CD4-positive, alpha-beta memory T cell (primary cell): ENCODE measurements at regions of chr1 and their contacts with region 1.

Region 1: GRCh38 chr1:23691499-23692307 is at the start of gene RPL11:
- DNase-seq: peak; percentile 85 to 92 (median 90)
- H3K4me3 ChIP-seq: peak within 1 kb of the TSS; percentile 37 to 93
- H3K4me3 Mint-ChIP-seq: peak within 1 kb of the TSS; percentile 93 to 99 (median 96)
- H3K27ac ChIP-seq: peak within 1 kb of the TSS; percentile 91
- H3K27ac Mint-ChIP-seq: peak within 1 kb of the TSS; percentile 87 to 98 (median 95)
- H3K4me1 ChIP-seq: peaks cover 47% of the 10 kb centered on the region
- H3K4me1 Mint-ChIP-seq: peaks cover 42 to 53% (median 45%) of the 10 kb centered on the region in 4 donors
- H3K27me3 ChIP-seq: no peaks in the 10 kb centered on the region
- H3K27me3 Mint-ChIP-seq: no peaks in the 10 kb centered on the region
- total RNA-seq, gene RPL11: 1,919 to 2,088 TPM

Region 2: GRCh38 chr1:23019094-23019862 is 672.4 kb before region 1 on chr1 and contains the start of gene KDM1A:
- CTCF ChIA-PET with region 1: interaction called, 3 read pairs
- POLR2A ChIA-PET with region 1: interaction called, 3 read pairs
- intact Hi-C with region 1: loop called (anchors 1 kb)
- DNase-seq: peak; percentile 90 to 94 (median 92)
- H3K4me3 ChIP-seq: peak within 1 kb of the TSS; percentile 85 to 95
- H3K4me3 Mint-ChIP-seq: peak within 1 kb of the TSS; percentile 96 to 99 (median 97)
- H3K27ac ChIP-seq: peak within 1 kb of the TSS; percentile 61
- H3K27ac Mint-ChIP-seq: peak within 1 kb of the TSS; percentile 73 to 97 (median 94)
- H3K4me1 ChIP-seq: peaks cover 15% of the 10 kb centered on the region
- H3K4me1 Mint-ChIP-seq: peaks cover 28 to 56% (median 40%) of the 10 kb centered on the region in 4 donors
- H3K27me3 ChIP-seq: no peaks in the 10 kb centered on the region
- H3K27me3 Mint-ChIP-seq: no peaks in the 10 kb centered on the region
- total RNA-seq, gene KDM1A: 43.2 TPM

Region 3: GRCh38 chr1:23367791-23368561 is 323.7 kb before region 1 on chr1:
- CTCF ChIA-PET with region 1: interaction called, 4 read pairs
- POLR2A ChIA-PET with region 1: interaction called, 6 read pairs
- intact Hi-C with region 1: loop called (anchors 10 kb)
- DNase-seq: peak; percentile 96 to 99 (median 98)
- H3K4me3 ChIP-seq: peak overlapping the region; percentile 98 to 100
- H3K4me3 Mint-ChIP-seq: peak overlapping the region; percentile 96 to 99 (median 99)
- H3K27ac ChIP-seq: peak overlapping the region; percentile 89
- H3K27ac Mint-ChIP-seq: peak overlapping the region; percentile 95 to 100 (median 98)
- H3K4me1 ChIP-seq: peaks cover 22% of the 10 kb centered on the region
- H3K4me1 Mint-ChIP-seq: peaks cover 17 to 46% (median 28%) of the 10 kb centered on the region in 4 donors
- H3K27me3 ChIP-seq: no peaks in the 10 kb centered on the region
- H3K27me3 Mint-ChIP-seq: no peaks in the 10 kb centered on the region

Region 4: DNA sequence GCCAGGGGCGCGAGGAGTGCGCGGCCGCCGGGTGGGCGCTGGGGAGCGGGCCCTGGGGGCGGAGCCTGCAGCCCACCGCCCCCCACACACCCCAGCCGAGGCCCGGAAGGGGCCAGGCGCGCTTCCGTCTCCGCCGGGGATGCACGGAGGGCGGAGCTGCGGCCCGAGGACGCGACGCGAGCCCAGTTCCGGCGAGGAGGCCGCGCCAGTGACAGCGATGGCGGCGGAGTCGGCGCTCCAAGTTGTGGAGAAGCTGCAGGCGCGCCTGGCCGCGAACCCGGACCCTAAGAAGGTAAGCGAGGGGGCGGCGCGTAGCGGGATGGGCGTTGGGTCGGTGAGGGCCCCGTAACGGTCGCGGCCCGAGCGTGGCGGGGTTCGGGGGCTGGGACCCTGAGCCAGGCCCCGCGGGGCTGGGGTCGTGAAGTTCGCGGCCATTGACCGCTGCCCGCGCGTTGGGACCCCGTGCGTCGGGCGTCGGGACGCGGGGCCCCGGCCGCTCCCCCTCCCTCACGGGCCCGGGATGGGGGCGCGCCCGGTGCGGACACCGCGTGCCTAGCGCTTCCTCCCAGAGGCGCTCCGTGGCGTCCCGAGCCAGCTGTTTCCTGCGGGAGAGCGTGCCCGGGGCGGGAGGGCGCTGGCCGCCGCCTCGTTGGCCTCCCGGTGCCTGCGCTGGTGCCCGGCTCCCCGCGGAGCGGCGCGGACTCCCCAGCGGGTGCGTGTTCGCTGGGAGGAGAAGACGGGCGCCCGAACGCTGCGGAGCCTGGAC is 51.8 kb after region 1 on chr1 and contains the start of gene ELOA:
- CTCF ChIA-PET with region 1: interaction called, 3 read pairs
- POLR2A ChIA-PET with region 1: interaction called, 40 read pairs
- intact Hi-C with region 1: loop called (anchors 1 kb)
- DNase-seq: peak; percentile 74 to 78 (median 77)
- H3K4me3 ChIP-seq: peak within 1 kb of the TSS; percentile 75 to 89
- H3K4me3 Mint-ChIP-seq: peak within 1 kb of the TSS; percentile 91 to 97 (median 92)
- H3K27ac ChIP-seq: peak within 1 kb of the TSS; percentile 87
- H3K27ac Mint-ChIP-seq: peak within 1 kb of the TSS; percentile 92 to 95 (median 94)
- H3K4me1 ChIP-seq: peaks cover 50% of the 10 kb centered on the region
- H3K4me1 Mint-ChIP-seq: peaks cover 37 to 57% (median 46%) of the 10 kb centered on the region in 4 donors
- H3K27me3 ChIP-seq: no peaks in the 10 kb centered on the region
- H3K27me3 Mint-ChIP-seq: no peaks in the 10 kb centered on the region
- total RNA-seq, gene ELOA: 28.3 to 31.7 TPM

Region 5: GRCh38 chr1:23790696-23791515 is 99.2 kb after region 1 on chr1 and contains the start of gene LYPLA2:
- CTCF ChIA-PET with region 1: no interaction called
- POLR2A ChIA-PET with region 1: interaction called, 6 read pairs
- intact Hi-C with region 1: loop called (anchors 1 kb)
- DNase-seq: peak; percentile 78 to 89 (median 78)
- H3K4me3 ChIP-seq: peak within 1 kb of the TSS; percentile 82 to 84
- H3K4me3 Mint-ChIP-seq: peak within 1 kb of the TSS; percentile 89 to 99 (median 98)
- H3K27ac ChIP-seq: peak within 1 kb of the TSS; percentile 70
- H3K27ac Mint-ChIP-seq: peak within 1 kb of the TSS; percentile 91 to 98 (median 97)
- H3K4me1 ChIP-seq: peaks cover 28% of the 10 kb centered on the region
- H3K4me1 Mint-ChIP-seq: peaks cover 10 to 40% (median 23%) of the 10 kb centered on the region in 4 donors
- H3K27me3 ChIP-seq: no peaks in the 10 kb centered on the region
- H3K27me3 Mint-ChIP-seq: no peaks in the 10 kb centered on the region
- total RNA-seq, gene LYPLA2: 52.6 to 55.8 TPM

Region 6: DNA sequence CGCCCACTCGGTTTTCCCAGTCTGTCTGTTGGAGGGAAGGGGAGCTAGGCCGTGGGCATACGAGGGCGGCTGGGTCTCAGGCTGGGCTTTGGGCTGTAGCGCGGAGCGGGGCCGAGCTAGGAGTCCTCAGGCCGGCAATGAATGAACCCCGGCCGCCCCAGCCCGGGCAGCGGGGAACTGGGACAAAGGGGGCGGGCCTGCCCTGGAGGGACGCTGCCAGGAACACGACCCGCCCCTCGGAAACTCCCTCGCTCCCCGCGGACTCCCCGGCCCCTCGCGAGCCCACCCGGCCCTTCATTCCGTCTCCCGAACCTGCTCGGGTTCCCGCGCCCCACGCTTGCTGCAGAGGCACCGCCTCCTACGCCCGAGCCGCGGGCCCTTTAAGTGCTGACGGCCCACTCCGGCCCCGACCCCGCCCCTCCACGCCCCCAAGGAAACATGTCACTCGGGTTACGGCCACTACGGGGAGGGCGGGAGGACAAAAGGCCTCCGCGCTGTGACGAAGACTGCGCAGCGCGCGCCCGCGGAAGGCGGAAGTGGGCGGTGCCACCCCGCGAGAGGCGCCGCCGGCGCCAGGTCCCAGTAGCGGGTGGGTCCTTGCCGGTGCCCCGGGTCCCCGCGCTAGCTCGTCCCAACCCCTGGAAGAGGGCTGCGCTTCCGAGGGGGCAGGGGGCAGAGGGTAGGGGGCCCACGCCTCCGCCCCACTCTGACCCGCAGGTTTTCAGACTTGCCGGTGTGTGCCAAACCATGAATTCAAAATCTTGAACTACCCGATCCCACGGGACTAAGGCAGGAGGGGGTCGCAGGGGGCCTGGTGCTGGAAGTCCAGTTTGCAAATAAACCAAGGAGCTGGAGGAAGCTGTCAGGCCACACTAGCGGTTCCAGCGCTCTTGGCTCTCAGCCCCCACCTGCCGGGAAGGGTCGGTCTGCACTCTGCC is 109.0 kb after region 1 on chr1 and contains the start of gene GALE:
- CTCF ChIA-PET with region 1: no interaction called
- POLR2A ChIA-PET with region 1: interaction called, 11 read pairs
- intact Hi-C with region 1: no loop called
- DNase-seq: peak; percentile 94 to 97 (median 94)
- H3K4me3 ChIP-seq: peak within 1 kb of the TSS; percentile 70 to 88
- H3K4me3 Mint-ChIP-seq: peak within 1 kb of the TSS; percentile 80 to 98 (median 92)
- H3K27ac ChIP-seq: peak within 1 kb of the TSS; percentile 92
- H3K27ac Mint-ChIP-seq: peak within 1 kb of the TSS; percentile 84 to 97 (median 94)
- H3K4me1 ChIP-seq: peaks cover 23% of the 10 kb centered on the region
- H3K4me1 Mint-ChIP-seq: peaks cover 8 to 37% (median 21%) of the 10 kb centered on the region in 4 donors
- H3K27me3 ChIP-seq: no peaks in the 10 kb centered on the region
- H3K27me3 Mint-ChIP-seq: no peaks in the 10 kb centered on the region
- total RNA-seq, gene GALE: 11.2 to 12.0 TPM